ENCODE measurements at regions of chr4 and their contacts with region 1.

Region 1: DNA sequence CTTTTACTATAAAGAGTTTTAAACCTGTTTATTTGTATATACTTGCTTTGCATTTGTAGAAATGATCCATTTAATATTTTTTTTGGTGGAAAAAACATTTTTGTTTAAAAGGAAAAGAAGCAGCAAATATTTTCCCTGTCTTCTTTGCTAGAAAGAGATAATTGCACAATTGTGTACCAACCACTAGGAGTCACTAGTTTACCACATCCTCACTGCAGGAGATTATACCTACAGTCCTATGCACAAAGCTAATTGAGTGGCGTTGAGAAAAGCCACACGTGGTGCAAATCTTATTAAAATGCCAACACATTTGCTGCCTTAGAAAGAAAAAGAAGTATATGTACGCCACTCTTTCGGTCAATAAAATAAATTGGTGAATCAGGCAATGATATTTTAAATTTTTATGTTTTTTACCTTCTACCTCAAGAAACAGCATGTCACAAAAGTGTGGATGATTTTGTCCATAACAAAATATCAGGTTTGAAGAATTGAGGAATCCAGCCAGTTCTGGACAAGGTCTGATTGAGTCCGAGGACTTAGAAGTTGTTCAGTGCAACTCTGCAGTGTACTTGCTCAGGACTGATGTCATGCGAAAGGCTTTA is 102.9 kb downstream of the GRXCR1 start:
- DNase-seq: peak; percentile 2
- H3K4me3 ChIP-seq: no peak overlapping the region
- H3K27ac ChIP-seq: no peak overlapping the region
- H3K4me1 ChIP-seq: no peaks in the 10 kb centered on the region
- H3K27me3 ChIP-seq: no peaks in the 10 kb centered on the region
- CTCF ChIP-seq: peak; percentile 17 to 26
- POLR2A ChIP-seq: no peak

Region 2: GRCh38 chr4:42945874-42946273 is 49.6 kb before region 1 on chr4:
- CTCF ChIA-PET with region 1: no interaction called
- POLR2A ChIA-PET with region 1: no interaction called
- dilution Hi-C with region 1: no loop called
- intact Hi-C with region 1: no loop called
- DNase-seq: no peak
- H3K4me3 ChIP-seq: no peak overlapping the region
- H3K27ac ChIP-seq: no peak overlapping the region
- H3K4me1 ChIP-seq: no peaks in the 10 kb centered on the region
- H3K27me3 ChIP-seq: no peaks in the 10 kb centered on the region
- CTCF ChIP-seq: no peak
- POLR2A ChIP-seq: no peak

Region 3: GRCh38 chr4:42965326-42965725 is 30.1 kb before region 1 on chr4:
- CTCF ChIA-PET with region 1: no interaction called
- POLR2A ChIA-PET with region 1: no interaction called
- dilution Hi-C with region 1: no loop called
- intact Hi-C with region 1: no loop called
- DNase-seq: no peak
- H3K4me3 ChIP-seq: no peak overlapping the region
- H3K27ac ChIP-seq: no peak overlapping the region
- H3K4me1 ChIP-seq: no peaks in the 10 kb centered on the region
- H3K27me3 ChIP-seq: no peaks in the 10 kb centered on the region
- CTCF ChIP-seq: no peak
- POLR2A ChIP-seq: no peak

Region 4: DNA sequence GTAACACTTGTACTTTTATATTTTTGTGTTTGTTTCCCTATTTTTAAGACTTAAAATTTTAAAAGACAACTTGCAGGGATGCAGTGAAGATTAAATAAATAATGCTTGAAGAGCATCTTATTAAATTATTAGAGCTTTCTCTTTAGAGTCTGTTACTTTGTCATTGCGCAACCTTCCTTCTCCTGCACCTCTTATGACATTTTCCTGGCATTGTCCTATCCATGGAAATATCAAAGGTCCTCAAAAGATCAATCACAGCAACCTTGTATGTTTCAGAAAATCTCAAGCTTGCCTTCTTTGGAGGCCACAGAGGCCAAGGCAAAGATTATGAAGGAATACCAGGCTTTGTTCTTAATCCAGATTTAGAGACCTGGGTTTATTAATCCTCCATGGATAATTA is 13.3 kb after region 1 on chr4:
- CTCF ChIA-PET with region 1: no interaction called
- POLR2A ChIA-PET with region 1: no interaction called
- dilution Hi-C with region 1: no loop called
- intact Hi-C with region 1: no loop called
- DNase-seq: no peak
- H3K4me3 ChIP-seq: no peak overlapping the region
- H3K27ac ChIP-seq: no peak overlapping the region
- H3K4me1 ChIP-seq: no peaks in the 10 kb centered on the region
- H3K27me3 ChIP-seq: no peaks in the 10 kb centered on the region
- CTCF ChIP-seq: no peak
- POLR2A ChIP-seq: no peak

Region 5: GRCh38 chr4:44425614-44426208 is 1430.3 kb after region 1 on chr4:
- CTCF ChIA-PET with region 1: interaction called, 4 read pairs
- POLR2A ChIA-PET with region 1: no interaction called
- dilution Hi-C with region 1: no loop called
- intact Hi-C with region 1: loop called (anchors 5 kb)
- DNase-seq: peak; percentile 35
- H3K4me3 ChIP-seq: no peak overlapping the region
- H3K27ac ChIP-seq: no peak overlapping the region
- H3K4me1 ChIP-seq: no peaks in the 10 kb centered on the region
- H3K27me3 ChIP-seq: no peaks in the 10 kb centered on the region
- CTCF ChIP-seq: peak; percentile 47 to 54
- POLR2A ChIP-seq: no peak

Region 6: GRCh38 chr4:44629280-44629866 is 1633.9 kb after region 1 on chr4:
- CTCF ChIA-PET with region 1: interaction called, 21 read pairs
- POLR2A ChIA-PET with region 1: no interaction called
- dilution Hi-C with region 1: no loop called
- intact Hi-C with region 1: loop called (anchors 1 kb)
- DNase-seq: peak; percentile 55
- H3K4me3 ChIP-seq: no peak overlapping the region
- H3K27ac ChIP-seq: no peak overlapping the region
- H3K4me1 ChIP-seq: no peaks in the 10 kb centered on the region
- H3K27me3 ChIP-seq: no peaks in the 10 kb centered on the region
- CTCF ChIP-seq: peak; percentile 49 to 59
- POLR2A ChIP-seq: no peak

Measured in endothelial cell of umbilical vein (primary cell).